Heart right ventricle (tissue), 16 donors: ENCODE measurements at regions of chr3 and their contacts with region 1.

Region 1: GRCh38 chr3:64187065-64187959 is 38.0 kb downstream of the PRICKLE2 start:
- DNase-seq: peak; percentile 54 to 75
- ATAC-seq: peak; percentile 78 to 89 (median 84)
- H3K4me3 ChIP-seq: peak overlapping the region in 1 of 10 donors; percentile 2
- H3K27ac ChIP-seq: peak overlapping the region; percentile 31 to 85 (median 72)
- H3K4me1 ChIP-seq: peaks cover 23 to 82% (median 59%) of the 10 kb centered on the region in 9 donors
- H3K27me3 ChIP-seq: no peaks in the 10 kb centered on the region
- CTCF ChIP-seq: peak in 2 of 9 donors; percentile 16 to 26

Region 2: DNA sequence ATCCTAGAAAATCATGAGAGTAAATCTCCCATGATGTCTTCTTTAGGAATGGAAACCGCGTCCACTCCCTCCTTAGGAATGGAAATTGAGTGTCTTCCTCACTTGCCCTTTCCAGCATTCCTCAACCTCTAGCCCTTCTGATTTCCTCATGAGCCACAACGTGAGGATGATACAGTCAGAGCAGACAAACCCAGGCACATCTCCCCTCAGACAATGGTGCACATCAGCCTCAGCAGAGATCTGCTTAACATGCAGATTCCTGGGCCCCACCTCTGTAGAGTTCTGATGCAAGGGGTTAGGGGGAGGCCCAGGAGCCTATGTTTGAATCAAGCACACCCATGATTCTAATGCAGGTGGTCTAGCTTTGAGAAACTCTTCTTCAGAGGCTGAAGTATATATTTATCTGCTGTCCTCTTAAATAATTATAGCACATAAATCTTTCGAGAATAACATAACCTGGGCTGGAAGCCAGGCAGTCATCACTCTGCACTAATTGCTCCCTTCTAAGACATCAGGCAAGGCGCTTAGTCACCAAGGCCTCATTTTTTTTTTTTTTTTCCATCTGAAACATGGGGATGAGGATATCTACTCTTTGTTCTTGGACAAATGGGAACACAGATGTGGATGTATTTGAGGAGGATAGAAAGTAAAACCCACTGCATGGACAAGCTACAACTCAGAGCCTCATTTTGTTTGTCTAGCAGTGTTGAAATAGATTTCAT is 43.7 kb before region 1 on chr3:
- intact Hi-C with region 1: loop called in 1 of 10 experiments (anchors 5 kb)
- DNase-seq: no peak
- ATAC-seq: peak in 5 of 8 donors; percentile 28 to 62 (median 38)
- H3K4me3 ChIP-seq: no peak overlapping the region
- H3K27ac ChIP-seq: peak overlapping the region in 2 of 10 donors; percentile 8 to 33
- H3K4me1 ChIP-seq: peaks cover 0 to 27% (median 15%) of the 10 kb centered on the region in 9 donors
- H3K27me3 ChIP-seq: no peaks in the 10 kb centered on the region
- CTCF ChIP-seq: no peak

Region 3: GRCh38 chr3:64150623-64151207 is 36.6 kb before region 1 on chr3:
- intact Hi-C with region 1: loop called in 1 of 10 experiments (anchors 5 kb)
- DNase-seq: peak; percentile 65 to 67
- ATAC-seq: peak; percentile 91 to 97 (median 96)
- H3K4me3 ChIP-seq: no peak overlapping the region
- H3K27ac ChIP-seq: peak overlapping the region; percentile 41 to 82 (median 68)
- H3K4me1 ChIP-seq: peaks cover 13 to 44% (median 30%) of the 10 kb centered on the region in 9 donors
- H3K27me3 ChIP-seq: no peaks in the 10 kb centered on the region
- CTCF ChIP-seq: no peak

Region 4: GRCh38 chr3:64224826-64225610 is 37.7 kb after region 1 on chr3 and contains the start of gene PRICKLE2:
- intact Hi-C with region 1: loop called in 1 of 10 experiments (anchors 1 kb)
- DNase-seq: peak; percentile 75 to 89
- ATAC-seq: peak; percentile 75 to 88 (median 84)
- H3K4me3 ChIP-seq: peak within 1 kb of the TSS in 9 of 10 donors; percentile 6 to 54 (median 47)
- H3K27ac ChIP-seq: peak within 1 kb of the TSS; percentile 27 to 89 (median 78)
- H3K4me1 ChIP-seq: peaks cover 11 to 80% (median 59%) of the 10 kb centered on the region in 9 donors
- H3K27me3 ChIP-seq: no peaks in the 10 kb centered on the region
- CTCF ChIP-seq: peak in 5 of 9 donors; percentile 16 to 54 (median 39)
- total RNA-seq, gene PRICKLE2: 6.4 to 12.2 (median 8.4) TPM

Region 5: DNA sequence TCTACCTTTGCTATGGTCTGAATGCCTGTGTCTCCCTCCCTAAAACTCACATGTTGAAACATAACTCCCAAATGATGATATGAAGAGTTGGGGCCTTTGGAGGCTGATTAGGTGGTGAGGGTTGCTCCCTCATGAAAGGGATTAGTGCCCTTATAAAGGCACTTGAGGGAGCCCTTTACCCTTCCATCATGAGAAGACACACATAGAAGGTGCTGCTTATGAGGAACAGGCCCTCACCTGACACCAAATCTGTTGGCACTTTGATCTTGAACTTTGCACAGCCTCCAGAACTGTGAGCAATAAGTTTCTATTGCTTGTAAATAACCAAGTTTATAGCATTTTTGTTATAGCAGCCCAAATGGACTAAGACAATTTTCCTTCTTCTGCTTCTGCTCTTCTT is 576.7 kb after region 1 on chr3:
- intact Hi-C with region 1: no loop called
- DNase-seq: no peak
- ATAC-seq: no peak
- H3K4me3 ChIP-seq: no peak overlapping the region
- H3K27ac ChIP-seq: no peak overlapping the region
- H3K4me1 ChIP-seq: peaks cover 8 to 60% (median 28%) of the 10 kb centered on the region in 9 donors
- H3K27me3 ChIP-seq: no peaks in the 10 kb centered on the region
- CTCF ChIP-seq: no peak